Endothelial cell of umbilical vein (primary cell): ENCODE measurements at regions of chr11 and their contacts with region 1.

Region 1: GRCh38 chr11:2151500-2152257 is 9.3 kb downstream of the INS start:
- DNase-seq: peak; percentile 74
- H3K4me3 ChIP-seq: no peak overlapping the region
- H3K27ac ChIP-seq: no peak overlapping the region
- H3K4me1 ChIP-seq: no peaks in the 10 kb centered on the region
- H3K27me3 ChIP-seq: peaks cover 13 to 16% of the 10 kb centered on the region in 2 experiments
- CTCF ChIP-seq: peak; percentile 59 to 73
- POLR2A ChIP-seq: no peak

Region 2: GRCh38 chr11:1845561-1846452 is 305.9 kb before region 1 on chr11:
- CTCF ChIA-PET with region 1: interaction called, 17 read pairs
- POLR2A ChIA-PET with region 1: no interaction called
- dilution Hi-C with region 1: no loop called
- intact Hi-C with region 1: no loop called
- DNase-seq: no peak
- H3K4me3 ChIP-seq: no peak overlapping the region
- H3K27ac ChIP-seq: no peak overlapping the region
- H3K4me1 ChIP-seq: no peaks in the 10 kb centered on the region
- H3K27me3 ChIP-seq: no peaks in the 10 kb centered on the region
- CTCF ChIP-seq: no peak
- POLR2A ChIP-seq: no peak

Region 3: DNA sequence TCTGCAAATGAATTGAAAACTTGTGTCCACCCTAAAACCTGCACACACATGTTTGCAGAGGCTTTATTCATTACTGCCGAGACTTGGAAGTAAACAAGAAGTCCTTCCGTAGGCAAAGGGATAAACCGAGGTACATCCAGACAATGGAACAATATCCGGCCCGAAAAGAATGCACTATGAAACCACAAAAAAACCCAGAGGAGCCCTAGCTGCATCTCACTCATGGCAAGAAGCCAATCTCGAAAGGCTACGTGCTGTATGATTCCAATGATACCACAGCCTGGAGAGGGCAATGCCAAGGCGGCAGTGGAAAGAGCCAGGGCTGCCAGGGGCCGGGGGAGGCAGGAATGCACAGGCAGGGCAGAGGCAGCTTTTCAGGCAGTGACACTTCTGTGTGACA is 207.7 kb before region 1 on chr11:
- CTCF ChIA-PET with region 1: interaction called, 53 read pairs
- POLR2A ChIA-PET with region 1: no interaction called
- dilution Hi-C with region 1: no loop called
- intact Hi-C with region 1: no loop called
- DNase-seq: peak; percentile 24
- H3K4me3 ChIP-seq: no peak overlapping the region
- H3K27ac ChIP-seq: no peak overlapping the region
- H3K4me1 ChIP-seq: no peaks in the 10 kb centered on the region
- H3K27me3 ChIP-seq: no peaks in the 10 kb centered on the region
- CTCF ChIP-seq: no peak
- POLR2A ChIP-seq: no peak

Region 4: GRCh38 chr11:2002807-2003206 is 148.9 kb before region 1 on chr11:
- CTCF ChIA-PET with region 1: interaction called, 52 read pairs
- POLR2A ChIA-PET with region 1: no interaction called
- dilution Hi-C with region 1: no loop called
- intact Hi-C with region 1: no loop called
- DNase-seq: no peak
- H3K4me3 ChIP-seq: no peak overlapping the region
- H3K27ac ChIP-seq: no peak overlapping the region
- H3K4me1 ChIP-seq: no peaks in the 10 kb centered on the region
- H3K27me3 ChIP-seq: no peaks in the 10 kb centered on the region
- CTCF ChIP-seq: no peak
- POLR2A ChIP-seq: no peak

Region 5: DNA sequence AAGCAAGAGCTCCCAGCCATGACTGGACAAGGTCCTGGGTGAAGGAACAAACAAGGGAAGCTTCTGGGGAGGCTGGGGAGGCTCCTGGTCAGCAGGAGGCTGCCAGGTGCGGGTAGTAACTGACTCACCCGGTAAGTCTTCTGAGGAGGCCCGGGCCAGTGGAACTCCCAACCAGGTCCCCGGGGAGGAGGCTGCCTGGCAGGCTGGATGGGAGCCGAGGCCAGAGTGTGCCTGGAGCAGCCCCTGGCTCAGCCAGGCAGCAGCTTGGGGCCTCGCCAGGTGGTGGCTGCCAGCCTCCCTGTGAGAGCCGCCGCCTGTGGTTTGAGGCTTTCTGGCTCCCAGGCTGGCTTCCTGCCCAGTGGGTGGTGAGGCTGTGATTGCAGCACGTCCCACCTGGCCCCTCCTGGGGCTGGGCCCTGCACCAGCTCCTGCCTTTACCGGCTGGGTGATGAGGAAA is 58.7 kb before region 1 on chr11:
- CTCF ChIA-PET with region 1: interaction called, 21 read pairs
- POLR2A ChIA-PET with region 1: no interaction called
- dilution Hi-C with region 1: no loop called
- intact Hi-C with region 1: no loop called
- DNase-seq: no peak
- H3K4me3 ChIP-seq: no peak overlapping the region
- H3K27ac ChIP-seq: no peak overlapping the region
- H3K4me1 ChIP-seq: peaks cover 13% of the 10 kb centered on the region
- H3K27me3 ChIP-seq: no peaks in the 10 kb centered on the region
- CTCF ChIP-seq: no peak
- POLR2A ChIP-seq: no peak

Region 6: GRCh38 chr11:2217211-2218030 is 65.7 kb after region 1 on chr11:
- CTCF ChIA-PET with region 1: no interaction called
- POLR2A ChIA-PET with region 1: no interaction called
- dilution Hi-C with region 1: no loop called
- intact Hi-C with region 1: no loop called
- DNase-seq: no peak
- H3K4me3 ChIP-seq: no peak overlapping the region
- H3K27ac ChIP-seq: no peak overlapping the region
- H3K4me1 ChIP-seq: no peaks in the 10 kb centered on the region
- H3K27me3 ChIP-seq: peaks cover 2 to 7% of the 10 kb centered on the region in 2 experiments
- CTCF ChIP-seq: no peak
- POLR2A ChIP-seq: no peak